ENCODE measurements at regions of chr10 and their contacts with region 1.

Region 1: DNA sequence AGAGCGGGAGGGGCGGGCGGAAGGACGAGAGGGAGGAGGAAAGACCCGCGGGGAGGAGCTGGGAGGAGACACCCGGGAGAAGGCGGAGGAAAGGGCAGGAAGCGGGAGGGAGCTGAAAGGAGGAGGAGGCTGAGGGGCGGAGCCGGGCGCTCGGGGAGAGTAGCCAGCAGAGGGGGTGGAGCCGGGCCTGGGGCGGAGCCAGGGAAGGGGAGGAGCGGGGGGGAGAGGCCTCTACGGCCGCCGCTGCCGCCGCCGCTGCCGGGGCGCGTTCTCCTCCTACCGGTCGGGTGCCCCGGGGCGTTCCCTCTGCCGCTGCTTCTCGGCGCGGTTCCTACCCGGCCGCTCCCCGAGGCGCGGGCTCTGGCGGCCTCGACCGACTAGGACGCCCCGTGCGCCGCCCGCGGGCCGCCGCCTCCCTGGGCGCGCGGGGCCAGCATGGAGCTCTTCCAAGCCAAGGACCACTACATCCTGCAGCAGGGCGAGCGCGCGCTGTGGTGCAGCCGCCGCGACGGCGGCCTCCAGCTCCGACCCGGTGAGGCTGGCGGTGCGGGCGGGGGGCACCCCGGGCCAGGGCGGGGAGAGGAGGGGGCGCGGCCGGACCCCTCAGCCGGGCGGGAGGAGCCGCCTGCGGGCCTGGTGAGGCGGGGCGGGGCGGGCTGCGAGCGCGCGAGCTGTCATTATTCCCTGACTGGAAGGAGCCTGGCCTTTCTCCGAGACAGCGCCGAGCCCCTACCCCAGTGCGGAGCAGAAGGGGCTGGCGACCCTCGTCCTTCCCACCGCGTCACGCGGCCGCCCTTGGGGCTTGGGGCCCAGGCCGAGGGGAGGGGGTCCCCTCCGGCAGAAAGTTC is at the start of gene INPP5F:
- DNase-seq: peak; percentile 99
- ATAC-seq: peak; percentile 96
- H3K4me3 Mint-ChIP-seq: peak within 1 kb of the TSS; percentile 82
- H3K27ac Mint-ChIP-seq: peak within 1 kb of the TSS; percentile 75
- H3K4me1 Mint-ChIP-seq: peaks cover 30% of the 10 kb centered on the region
- H3K27me3 Mint-ChIP-seq: no peaks in the 10 kb centered on the region
- CTCF ChIP-seq: no peak
- total RNA-seq, gene INPP5F: 79.3 to 83.3 TPM (median 80.6 TPM) in 3 replicates

Region 2: GRCh38 chr10:119715628-119716505 is 10.2 kb before region 1 on chr10:
- CTCF ChIA-PET with region 1: interaction called, 5 read pairs
- POLR2A ChIA-PET with region 1: interaction called, 10 read pairs
- DNase-seq: no peak
- ATAC-seq: peak; percentile 46
- H3K4me3 Mint-ChIP-seq: no peak overlapping the region
- H3K27ac Mint-ChIP-seq: 0 out of 2 replicates have a peak overlapping the region, but pooled peaks have one; percentile 18
- H3K4me1 Mint-ChIP-seq: peaks cover 10% of the 10 kb centered on the region
- H3K27me3 Mint-ChIP-seq: peaks cover 4% of the 10 kb centered on the region; the same call in 1 of the 2 replicates
- CTCF ChIP-seq: no peak

Region 3: DNA sequence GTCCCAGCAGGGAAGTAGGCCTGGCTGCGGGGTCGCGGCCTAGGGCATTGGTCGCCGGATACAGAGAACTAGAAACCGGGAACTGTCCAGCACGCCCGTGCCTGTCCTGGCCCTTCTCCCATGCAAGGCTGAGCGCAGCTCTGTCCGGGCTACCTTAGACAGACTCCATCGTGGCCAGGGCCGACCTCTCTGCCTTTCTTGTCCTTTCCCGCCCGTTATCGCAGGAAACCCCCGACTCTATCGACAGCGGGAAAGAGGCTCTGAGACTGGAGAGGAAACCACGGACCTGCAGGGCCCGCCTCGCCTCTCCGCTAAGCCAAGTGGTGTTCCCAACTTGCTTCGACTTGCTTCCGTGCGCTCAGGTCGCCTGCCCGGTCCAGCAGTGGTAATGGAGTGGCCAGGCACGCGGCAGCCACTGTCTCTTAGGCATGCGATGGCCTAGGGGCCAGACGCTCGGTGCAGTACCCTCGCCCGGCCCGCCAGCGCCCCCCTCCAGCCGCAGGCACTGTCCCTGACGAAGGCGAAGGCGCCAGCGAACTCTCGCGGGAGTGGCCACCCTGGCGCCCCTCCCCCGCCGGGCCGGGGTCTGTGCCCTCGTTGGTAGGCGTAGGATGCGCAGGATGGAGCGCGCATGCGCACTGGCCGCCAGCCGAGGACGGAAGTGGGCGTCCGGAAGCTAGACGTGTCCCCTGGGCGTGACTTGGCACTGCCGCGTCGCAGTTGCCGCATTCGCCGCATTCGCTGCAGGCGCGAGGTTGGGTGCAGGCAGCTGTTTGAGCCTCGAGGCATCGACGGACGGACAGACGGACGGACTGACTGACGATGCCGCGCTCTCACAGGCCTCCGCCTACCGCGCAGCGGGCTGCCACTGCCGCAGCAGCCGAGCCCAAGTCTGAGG is 92.2 kb after region 1 on chr10:
- CTCF ChIA-PET with region 1: interaction called, 11 read pairs
- POLR2A ChIA-PET with region 1: interaction called, 8 read pairs
- DNase-seq: peak; percentile 97
- ATAC-seq: peak; percentile 95
- H3K4me3 Mint-ChIP-seq: peak overlapping the region; percentile 72
- H3K27ac Mint-ChIP-seq: peak overlapping the region; percentile 94
- H3K4me1 Mint-ChIP-seq: peaks cover 32% of the 10 kb centered on the region
- H3K27me3 Mint-ChIP-seq: no peaks in the 10 kb centered on the region
- CTCF ChIP-seq: peak; percentile 44; the same call in 1 of the 2 replicates